Activated CD8-positive, alpha-beta T cell treated with anti-CD3 and anti-CD28 coated beads, Interleukin-2, amount 10 ng/mL, durations not matched to agents 7 days and 5 days (primary cell): ENCODE measurements at regions of chr3 and their contacts with region 1.

Region 1: DNA sequence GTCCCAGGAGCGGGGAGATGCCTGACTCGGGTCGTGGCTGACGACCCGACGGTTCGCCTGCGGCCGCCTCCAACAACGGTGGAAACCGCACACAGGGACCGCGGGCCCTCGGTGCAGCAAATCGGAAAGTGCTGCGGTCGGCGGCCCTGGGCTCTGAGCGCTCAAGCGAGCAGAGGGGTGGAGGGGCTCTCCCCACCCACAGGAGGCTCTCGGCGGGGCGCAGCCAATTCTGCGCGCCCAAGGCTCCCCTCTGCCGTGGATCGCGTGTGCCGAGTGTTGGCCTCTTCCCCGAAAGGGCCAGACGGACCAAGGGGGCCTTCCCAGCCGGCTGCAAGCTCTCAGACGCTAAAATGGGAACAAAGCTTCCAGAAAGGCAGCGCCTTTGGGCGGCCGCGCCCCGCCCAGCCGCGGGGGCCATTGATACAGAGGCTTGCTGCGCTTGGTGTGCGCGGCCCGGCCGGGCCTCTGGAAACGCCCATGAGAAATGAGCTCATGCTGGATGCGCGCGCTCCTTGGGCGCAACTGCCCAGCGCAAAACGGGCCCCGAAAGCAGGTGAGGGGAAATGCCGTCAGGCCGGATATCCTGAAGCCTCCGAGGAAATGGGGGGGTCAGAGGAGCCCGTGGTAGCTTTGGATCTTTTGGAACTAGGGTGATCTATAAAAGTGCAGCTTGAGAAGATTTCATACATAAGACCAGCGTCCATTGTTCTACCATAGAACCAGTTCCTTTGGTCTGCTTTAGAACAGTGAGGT is 1.2 kb upstream of the GSK3B start:
- DNase-seq: peak; percentile 95
- ATAC-seq: peak; percentile 50
- H3K4me3 Mint-ChIP-seq: no peak overlapping the region
- H3K27ac Mint-ChIP-seq: no peak overlapping the region
- H3K4me1 Mint-ChIP-seq: peaks cover 31% of the 10 kb centered on the region
- H3K27me3 Mint-ChIP-seq: no peaks in the 10 kb centered on the region

Region 2: GRCh38 chr3:119891944-119892721 is 203.3 kb before region 1 on chr3:
- CTCF ChIA-PET with region 1: interaction called, 25 read pairs
- POLR2A ChIA-PET with region 1: interaction called, 6 read pairs
- DNase-seq: peak; percentile 68
- ATAC-seq: peak; percentile 80
- H3K4me3 Mint-ChIP-seq: no peak overlapping the region
- H3K27ac Mint-ChIP-seq: no peak overlapping the region
- H3K4me1 Mint-ChIP-seq: peaks cover 4% of the 10 kb centered on the region
- H3K27me3 Mint-ChIP-seq: no peaks in the 10 kb centered on the region

Region 3: DNA sequence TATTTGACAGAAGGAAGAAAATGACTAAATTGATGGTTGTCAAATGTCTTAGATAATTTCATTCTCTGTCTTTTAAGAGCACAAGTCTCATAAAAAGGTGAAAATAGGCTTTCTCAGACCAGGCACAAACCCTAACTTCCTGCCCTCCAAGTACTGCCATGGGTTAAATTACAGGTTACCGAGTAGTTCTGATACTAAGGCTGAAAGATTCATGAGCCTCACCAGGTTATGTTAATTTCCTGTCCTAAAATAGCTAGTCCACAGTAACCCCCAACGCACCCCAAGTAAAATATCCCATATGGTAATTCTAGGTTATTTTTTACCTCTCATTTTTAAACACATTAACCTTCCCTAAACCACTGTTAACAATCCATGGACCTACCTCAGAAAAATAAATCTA is 43.2 kb before region 1 on chr3:
- CTCF ChIA-PET with region 1: interaction called, 6 read pairs
- POLR2A ChIA-PET with region 1: interaction called, 24 read pairs
- DNase-seq: peak; percentile 25
- ATAC-seq: peak; percentile 77
- H3K4me3 Mint-ChIP-seq: peak overlapping the region; percentile 9
- H3K27ac Mint-ChIP-seq: peak overlapping the region; percentile 48
- H3K4me1 Mint-ChIP-seq: peaks cover 54% of the 10 kb centered on the region
- H3K27me3 Mint-ChIP-seq: no peaks in the 10 kb centered on the region

Region 4: GRCh38 chr3:120147072-120147871 is 51.9 kb after region 1 on chr3:
- CTCF ChIA-PET with region 1: interaction called, 11 read pairs
- POLR2A ChIA-PET with region 1: interaction called, 6 read pairs
- DNase-seq: peak; percentile 58
- ATAC-seq: peak; percentile 82
- H3K4me3 Mint-ChIP-seq: no peak overlapping the region
- H3K27ac Mint-ChIP-seq: no peak overlapping the region
- H3K4me1 Mint-ChIP-seq: peaks cover 22% of the 10 kb centered on the region
- H3K27me3 Mint-ChIP-seq: no peaks in the 10 kb centered on the region

Region 5: GRCh38 chr3:120348981-120349818 is 253.8 kb after region 1 on chr3 and contains the start of gene LRRC58:
- CTCF ChIA-PET with region 1: interaction called, 5 read pairs
- POLR2A ChIA-PET with region 1: interaction called, 22 read pairs
- DNase-seq: peak; percentile 90
- ATAC-seq: peak; percentile 91
- H3K4me3 Mint-ChIP-seq: peak within 1 kb of the TSS; percentile 89
- H3K27ac Mint-ChIP-seq: peak within 1 kb of the TSS; percentile 89
- H3K4me1 Mint-ChIP-seq: peaks cover 45% of the 10 kb centered on the region
- H3K27me3 Mint-ChIP-seq: peaks cover 19% of the 10 kb centered on the region
- total RNA-seq, gene LRRC58: 25.5 to 27.9 TPM